ENCODE measurements at regions of chr2 and their contacts with region 1.

Region 1: DNA sequence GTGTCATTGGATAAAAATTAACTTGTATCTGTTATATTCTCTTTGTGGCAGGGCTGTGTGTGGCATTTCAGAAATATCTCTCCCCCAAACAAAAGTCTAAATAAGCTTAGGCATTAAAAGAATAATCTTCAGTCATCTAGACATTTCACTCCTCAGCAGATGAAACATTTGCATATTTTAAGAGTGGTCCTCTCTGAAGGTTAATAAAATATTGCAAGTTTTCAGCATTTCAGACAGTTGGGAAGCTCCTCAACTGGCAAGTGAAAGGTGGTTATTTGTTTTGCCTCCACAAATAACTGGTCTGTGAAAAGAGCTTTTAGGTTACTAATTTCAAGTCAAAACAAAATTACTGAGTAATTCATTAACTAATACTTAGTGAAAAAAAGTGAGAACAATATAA is 462.6 kb downstream of the EPHA4 start:
- DNase-seq: no peak
- H3K4me3 ChIP-seq: no peak overlapping the region
- H3K27ac ChIP-seq: no peak overlapping the region
- H3K4me1 ChIP-seq: no peaks in the 10 kb centered on the region
- H3K27me3 ChIP-seq: no peaks in the 10 kb centered on the region
- CTCF ChIP-seq: no peak
- POLR2A ChIP-seq: no peak

Region 2: GRCh38 chr2:221134718-221135117 is 25.2 kb after region 1 on chr2:
- intact Hi-C with region 1: no loop called
- DNase-seq: no peak
- H3K4me3 ChIP-seq: no peak overlapping the region
- H3K27ac ChIP-seq: no peak overlapping the region
- H3K4me1 ChIP-seq: no peaks in the 10 kb centered on the region
- H3K27me3 ChIP-seq: no peaks in the 10 kb centered on the region
- CTCF ChIP-seq: no peak
- POLR2A ChIP-seq: no peak

Region 3: DNA sequence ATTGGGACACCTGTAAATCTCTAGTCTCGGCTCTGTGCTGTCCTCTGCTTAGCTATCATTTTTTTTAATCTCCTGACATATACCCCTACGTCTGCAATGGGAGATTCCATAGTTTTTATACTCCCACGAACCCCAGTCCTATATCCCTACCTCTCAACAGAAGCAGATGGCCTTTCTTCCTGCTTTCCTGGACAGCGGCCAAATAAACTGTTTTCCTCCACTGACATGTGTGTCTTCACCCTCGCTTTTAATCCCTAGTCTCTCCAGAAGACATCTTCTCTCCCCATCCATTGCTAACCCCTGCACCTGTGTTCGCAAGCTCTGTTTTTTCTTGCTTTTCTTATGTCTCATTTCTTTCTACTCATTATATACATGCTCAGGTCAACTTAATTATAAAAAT is 67.1 kb after region 1 on chr2:
- intact Hi-C with region 1: loop called (anchors 5 kb)
- DNase-seq: no peak
- H3K4me3 ChIP-seq: no peak overlapping the region
- H3K27ac ChIP-seq: no peak overlapping the region
- H3K4me1 ChIP-seq: no peaks in the 10 kb centered on the region
- H3K27me3 ChIP-seq: no peaks in the 10 kb centered on the region
- CTCF ChIP-seq: no peak
- POLR2A ChIP-seq: no peak

Measured in breast epithelium (tissue), 4 donors.